OCI-LY7 (cell line): ENCODE measurements at regions of chr6 and their contacts with region 1.

Region 1: GRCh38 chr6:34986845-34987246 is 97.8 kb downstream of the ANKS1A start:
- DNase-seq: peak; percentile 81
- H3K4me3 ChIP-seq: no peak overlapping the region
- H3K27ac ChIP-seq: no peak overlapping the region
- H3K4me1 ChIP-seq: no peaks in the 10 kb centered on the region
- CTCF ChIP-seq: peak; percentile 96

Region 2: DNA sequence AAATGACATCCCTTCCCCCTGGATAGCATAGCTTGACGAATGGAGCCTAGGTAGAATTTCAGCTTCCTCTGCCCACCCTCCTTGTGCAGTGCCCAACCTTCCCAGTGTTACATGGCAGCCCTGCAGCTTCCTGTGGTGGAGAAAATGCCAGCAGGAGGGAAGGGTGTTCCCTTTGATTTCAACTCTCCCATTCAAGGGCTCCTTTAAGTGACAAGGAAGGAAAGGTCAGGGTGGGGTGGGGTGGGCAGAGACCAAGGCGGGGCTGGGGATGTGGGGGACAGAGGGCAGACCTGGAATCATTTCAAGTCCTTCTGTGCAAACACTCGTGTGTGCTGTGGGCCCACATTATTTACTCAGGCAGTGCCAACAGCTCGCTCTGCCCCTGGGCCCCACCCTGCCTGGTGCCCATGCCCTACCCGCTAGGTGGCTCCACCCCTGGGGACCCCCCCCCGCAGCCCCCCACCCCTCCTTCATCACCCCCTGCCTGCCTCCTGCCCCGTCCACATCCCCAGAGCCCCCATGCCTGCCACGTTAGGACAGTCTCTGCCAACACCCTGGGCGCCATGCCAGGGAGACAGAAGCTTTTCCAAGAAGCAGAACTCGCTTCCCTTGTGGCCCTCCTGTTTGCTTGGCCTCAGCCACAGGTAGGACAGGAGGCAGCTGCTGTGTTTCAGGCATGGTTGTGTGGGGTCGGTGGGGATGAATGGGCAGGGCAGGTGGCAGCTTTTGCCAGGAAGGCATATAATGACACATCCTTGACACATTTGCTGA is 440.1 kb before region 1 on chr6:
- CTCF ChIA-PET with region 1: no interaction called
- POLR2A ChIA-PET with region 1: no interaction called
- intact Hi-C with region 1: no loop called
- DNase-seq: no peak
- H3K4me3 ChIP-seq: no peak overlapping the region
- H3K27ac ChIP-seq: no peak overlapping the region
- H3K4me1 ChIP-seq: no peaks in the 10 kb centered on the region
- CTCF ChIP-seq: no peak

Region 3: DNA sequence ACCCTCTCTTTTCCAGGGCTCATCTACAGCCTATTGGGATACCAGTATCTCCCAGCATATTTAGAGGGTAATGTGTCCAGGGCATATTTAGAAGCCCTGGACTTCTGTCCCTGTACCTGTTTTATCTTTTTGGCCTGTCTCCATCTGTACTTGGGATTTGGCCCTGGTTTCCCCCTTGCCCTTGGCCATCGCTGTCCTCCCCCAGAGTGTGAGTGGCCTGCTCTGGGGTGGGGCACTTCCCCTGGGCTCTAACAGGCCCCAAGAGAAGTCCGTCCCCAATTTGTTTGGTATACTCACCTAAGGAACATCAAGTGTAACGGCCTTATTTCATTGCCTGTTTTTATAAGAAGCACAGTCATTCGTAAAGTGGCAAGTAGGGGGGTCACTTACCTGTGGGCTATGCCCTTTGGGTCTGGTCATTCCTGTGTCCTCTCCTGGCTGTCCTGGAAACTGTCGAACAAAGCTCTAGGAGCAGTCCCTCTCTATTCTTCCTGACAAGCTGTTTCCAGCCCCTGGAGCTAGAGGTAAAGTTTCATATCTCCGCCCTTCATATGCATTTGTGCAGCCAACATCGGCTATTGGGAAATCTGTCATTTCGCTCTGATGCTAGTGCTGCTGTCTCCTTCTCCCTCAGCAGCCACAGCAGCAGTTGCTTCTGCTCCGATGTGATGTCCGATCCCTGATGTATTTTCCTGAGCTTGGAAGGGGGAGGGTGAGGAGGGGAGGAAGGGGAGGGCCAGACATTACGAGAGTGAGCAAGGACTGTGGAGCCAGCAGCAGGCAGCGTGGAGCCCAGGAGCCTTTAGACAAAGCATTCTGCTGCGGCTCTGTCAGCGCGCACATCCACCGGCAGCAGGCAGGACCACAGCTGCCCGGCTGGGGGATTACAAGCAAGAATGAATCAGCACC is 70.9 kb after region 1 on chr6:
- CTCF ChIA-PET with region 1: interaction called, 10 read pairs
- POLR2A ChIA-PET with region 1: no interaction called
- intact Hi-C with region 1: no loop called
- DNase-seq: no peak
- H3K4me3 ChIP-seq: no peak overlapping the region
- H3K27ac ChIP-seq: no peak overlapping the region
- H3K4me1 ChIP-seq: peaks cover 9% of the 10 kb centered on the region
- CTCF ChIP-seq: no peak

Region 4: GRCh38 chr6:35139908-35140655 is 153.2 kb after region 1 on chr6:
- CTCF ChIA-PET with region 1: interaction called, 3 read pairs
- POLR2A ChIA-PET with region 1: interaction called, 3 read pairs
- intact Hi-C with region 1: loop called (anchors 1 kb)
- DNase-seq: peak; percentile 79
- H3K4me3 ChIP-seq: no peak overlapping the region
- H3K27ac ChIP-seq: no peak overlapping the region
- H3K4me1 ChIP-seq: peaks cover 12% of the 10 kb centered on the region
- CTCF ChIP-seq: peak; percentile 97